ENCODE measurements at regions of chr11 and their contacts with region 1.

Region 1: DNA sequence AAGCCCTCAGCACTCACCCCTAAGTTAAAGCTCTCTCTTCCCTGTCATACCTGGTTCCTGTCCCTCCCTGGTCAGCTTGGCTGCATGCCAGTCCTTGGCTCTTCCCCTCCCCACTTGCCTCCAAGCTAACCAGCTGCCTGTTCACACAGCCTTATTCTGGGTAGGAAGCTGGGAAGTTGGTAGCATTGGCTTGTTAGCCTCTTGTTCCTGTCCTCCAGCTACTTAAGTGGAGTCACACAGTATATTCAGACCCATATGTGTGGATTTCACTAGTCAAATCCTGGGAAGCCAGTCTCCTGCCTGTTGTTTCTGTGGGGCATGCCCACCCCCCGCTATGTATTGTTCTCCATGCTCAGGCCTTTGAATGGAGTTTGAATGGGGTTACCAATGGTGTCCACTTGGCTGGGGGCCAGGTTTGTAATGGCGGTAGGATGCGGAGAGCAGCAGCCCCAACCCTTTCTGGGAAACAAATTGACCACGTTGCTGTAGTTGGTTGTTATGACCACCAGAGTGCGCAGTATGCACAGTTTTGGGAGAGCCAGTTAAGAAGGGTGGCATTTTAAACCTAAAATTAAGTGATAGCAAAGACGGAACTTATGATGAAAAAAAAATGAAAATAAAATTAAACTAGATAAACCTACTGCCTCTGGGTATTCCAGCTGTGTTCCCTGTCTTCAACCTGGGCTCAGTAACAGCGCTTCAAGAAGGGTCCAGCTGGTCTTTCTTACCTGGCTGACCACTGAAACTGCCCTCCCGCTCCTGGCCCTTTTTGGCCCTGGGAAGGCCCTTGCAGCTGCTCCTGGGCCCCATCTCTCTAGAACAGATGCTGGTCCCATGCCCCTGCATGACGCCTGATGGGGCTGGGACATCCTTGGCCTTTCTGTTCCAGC is 10.7 kb upstream of the RPS3 start:
- DNase-seq: peak; percentile 86
- H3K4me3 Mint-ChIP-seq: no peak overlapping the region
- H3K27ac Mint-ChIP-seq: no peak overlapping the region
- H3K4me1 Mint-ChIP-seq: peaks cover 5% of the 10 kb centered on the region
- H3K27me3 Mint-ChIP-seq: no peaks in the 10 kb centered on the region
- CTCF ChIP-seq: peak; percentile 67

Region 2: DNA sequence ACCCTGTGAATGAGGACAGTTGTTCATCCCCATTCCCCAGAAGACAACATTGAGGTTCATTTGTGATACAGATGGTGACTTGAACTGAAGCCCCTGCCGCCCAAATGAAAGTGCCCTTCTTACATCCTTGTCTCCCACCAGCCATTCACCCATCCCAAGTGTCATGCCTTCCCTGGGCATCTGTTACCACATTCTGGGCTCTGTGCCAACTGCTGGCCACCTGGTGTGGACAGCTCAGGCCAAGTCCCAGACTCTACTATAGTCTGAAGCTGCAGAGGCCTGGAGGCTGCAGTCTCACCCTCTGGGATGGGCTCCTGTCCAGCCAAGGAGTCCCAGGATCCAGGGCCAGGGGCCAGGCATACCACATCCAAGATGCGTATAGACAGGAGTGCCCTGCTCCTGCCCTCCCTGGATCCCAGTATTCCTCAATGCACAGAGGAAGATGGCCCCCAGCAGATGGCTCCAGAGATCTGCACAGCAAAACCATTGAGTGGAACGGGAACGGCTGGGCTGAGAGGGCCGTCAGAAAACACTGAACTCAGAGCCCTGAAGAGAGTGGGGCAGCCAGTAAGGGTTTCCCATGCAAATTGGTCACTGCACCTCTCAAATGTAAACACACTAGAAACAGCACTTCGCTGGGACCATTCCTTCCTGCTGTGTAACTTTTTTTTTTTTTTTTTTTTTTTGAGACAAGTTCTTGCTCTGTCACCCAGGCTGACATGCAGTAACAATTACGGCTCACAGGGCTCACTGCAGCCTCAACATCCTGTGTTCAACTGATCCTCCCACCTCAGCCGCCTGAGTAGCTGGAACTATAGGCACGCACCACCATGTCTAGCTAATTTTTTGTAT is 60.0 kb before region 1 on chr11:
- CTCF ChIA-PET with region 1: interaction called, 36 read pairs
- POLR2A ChIA-PET with region 1: interaction called, 5 read pairs
- intact Hi-C with region 1: loop called (anchors 1 kb)
- DNase-seq: peak; percentile 92
- H3K4me3 Mint-ChIP-seq: peak overlapping the region; percentile 26
- H3K27ac Mint-ChIP-seq: no peak overlapping the region
- H3K4me1 Mint-ChIP-seq: peaks cover 27% of the 10 kb centered on the region
- H3K27me3 Mint-ChIP-seq: no peaks in the 10 kb centered on the region
- CTCF ChIP-seq: peak; percentile 58

Region 3: DNA sequence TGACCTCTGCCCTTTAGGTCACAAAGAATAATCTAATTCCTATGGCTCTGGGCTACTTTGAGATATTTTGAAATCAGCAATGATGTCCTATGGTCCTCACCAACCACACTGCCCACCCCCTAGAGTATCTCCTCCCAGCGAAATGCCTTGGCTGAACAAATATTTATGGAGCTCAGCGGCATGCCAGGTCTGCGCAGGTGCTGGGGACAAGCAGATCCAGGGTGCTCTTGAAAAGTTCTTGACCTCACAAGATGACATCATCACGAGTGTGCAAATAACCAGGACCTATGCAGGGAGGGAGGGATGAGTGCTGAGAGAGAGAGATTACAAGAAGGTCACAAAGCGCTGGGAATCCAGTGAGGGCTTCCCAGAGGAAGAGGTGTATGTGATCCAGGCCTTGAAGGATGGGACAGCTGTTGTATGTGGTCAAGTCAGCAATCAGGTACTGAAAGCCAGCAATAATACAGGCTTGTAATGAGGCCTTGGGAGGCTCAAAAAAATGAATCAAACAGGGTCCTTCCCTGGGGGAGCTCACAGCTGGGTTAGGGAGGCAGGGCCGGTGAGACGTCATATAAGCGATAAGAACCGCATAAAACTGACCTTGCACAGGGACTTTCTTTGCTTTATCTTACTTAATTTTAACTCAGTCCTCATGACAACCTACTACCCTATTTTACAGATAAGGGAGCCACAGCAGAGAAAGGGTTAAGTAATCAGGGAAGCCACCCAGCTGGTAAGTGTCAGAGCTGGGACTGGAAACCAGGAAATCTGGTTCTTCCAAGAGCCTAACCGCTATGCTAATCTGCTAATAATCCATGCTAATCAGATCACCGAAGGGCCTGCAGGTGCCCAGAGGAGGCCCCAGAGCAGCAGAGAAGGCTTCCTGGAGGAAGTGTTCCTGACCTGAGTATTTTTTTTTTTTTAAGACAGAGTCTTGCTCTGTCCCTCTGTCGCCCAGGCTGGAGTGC is 45.4 kb before region 1 on chr11:
- CTCF ChIA-PET with region 1: interaction called, 22 read pairs
- POLR2A ChIA-PET with region 1: no interaction called
- intact Hi-C with region 1: no loop called
- DNase-seq: no peak
- H3K4me3 Mint-ChIP-seq: no peak overlapping the region
- H3K27ac Mint-ChIP-seq: no peak overlapping the region
- H3K4me1 Mint-ChIP-seq: peaks cover 27% of the 10 kb centered on the region
- H3K27me3 Mint-ChIP-seq: no peaks in the 10 kb centered on the region
- CTCF ChIP-seq: no peak

Region 4: GRCh38 chr11:75399344-75400145 is 10.9 kb after region 1 on chr11 and contains the start of gene RPS3:
- CTCF ChIA-PET with region 1: interaction called, 19 read pairs
- POLR2A ChIA-PET with region 1: interaction called, 15 read pairs
- intact Hi-C with region 1: no loop called
- DNase-seq: peak; percentile 93
- H3K4me3 Mint-ChIP-seq: peak within 1 kb of the TSS; percentile 95
- H3K27ac Mint-ChIP-seq: peak within 1 kb of the TSS; percentile 99
- H3K4me1 Mint-ChIP-seq: peaks cover 29% of the 10 kb centered on the region
- H3K27me3 Mint-ChIP-seq: no peaks in the 10 kb centered on the region
- CTCF ChIP-seq: no peak
- total RNA-seq, gene RPS3: 3,172 and 3,444 TPM in 2 replicates

Region 5: DNA sequence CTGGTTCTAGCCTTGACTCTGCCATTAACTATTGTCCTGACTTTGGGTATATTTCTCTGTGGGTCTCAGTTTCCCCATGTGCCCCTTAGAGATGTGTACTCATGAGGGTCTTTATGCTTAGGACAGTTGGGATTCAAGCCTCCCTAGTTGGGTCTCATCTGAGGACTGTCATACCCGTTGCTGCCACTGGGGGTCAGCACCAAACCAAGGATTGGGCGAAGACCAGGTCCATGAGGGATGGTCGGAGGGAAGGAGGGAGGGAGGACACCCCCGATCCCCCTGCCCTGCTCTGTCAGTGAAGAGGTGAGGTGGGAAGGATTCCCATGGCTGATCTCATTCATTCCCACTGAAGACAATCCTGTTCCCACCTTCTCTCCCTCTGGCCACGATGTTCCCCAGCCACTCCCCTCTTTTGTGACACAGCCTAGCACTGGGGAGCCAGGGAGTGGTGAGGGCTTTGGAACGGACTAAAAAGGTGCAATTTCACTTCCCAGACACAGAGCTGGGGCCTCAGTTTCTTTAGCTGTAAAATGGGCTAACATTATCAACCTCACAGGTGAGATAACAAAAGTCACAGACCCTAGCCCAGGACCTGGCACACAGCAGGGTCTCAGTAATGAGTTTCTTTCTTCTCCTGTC is 56.8 kb after region 1 on chr11:
- CTCF ChIA-PET with region 1: interaction called, 19 read pairs
- POLR2A ChIA-PET with region 1: no interaction called
- intact Hi-C with region 1: loop called (anchors 2 kb)
- DNase-seq: peak; percentile 69
- H3K4me3 Mint-ChIP-seq: no peak overlapping the region
- H3K27ac Mint-ChIP-seq: no peak overlapping the region
- H3K4me1 Mint-ChIP-seq: no peaks in the 10 kb centered on the region
- H3K27me3 Mint-ChIP-seq: no peaks in the 10 kb centered on the region
- CTCF ChIP-seq: peak; percentile 98

Measured in MCF 10A (cell line).